Naive thymus-derived CD4-positive, alpha-beta T cell (primary cell): ENCODE measurements at regions of chr7 and their contacts with region 1.

Region 1: DNA sequence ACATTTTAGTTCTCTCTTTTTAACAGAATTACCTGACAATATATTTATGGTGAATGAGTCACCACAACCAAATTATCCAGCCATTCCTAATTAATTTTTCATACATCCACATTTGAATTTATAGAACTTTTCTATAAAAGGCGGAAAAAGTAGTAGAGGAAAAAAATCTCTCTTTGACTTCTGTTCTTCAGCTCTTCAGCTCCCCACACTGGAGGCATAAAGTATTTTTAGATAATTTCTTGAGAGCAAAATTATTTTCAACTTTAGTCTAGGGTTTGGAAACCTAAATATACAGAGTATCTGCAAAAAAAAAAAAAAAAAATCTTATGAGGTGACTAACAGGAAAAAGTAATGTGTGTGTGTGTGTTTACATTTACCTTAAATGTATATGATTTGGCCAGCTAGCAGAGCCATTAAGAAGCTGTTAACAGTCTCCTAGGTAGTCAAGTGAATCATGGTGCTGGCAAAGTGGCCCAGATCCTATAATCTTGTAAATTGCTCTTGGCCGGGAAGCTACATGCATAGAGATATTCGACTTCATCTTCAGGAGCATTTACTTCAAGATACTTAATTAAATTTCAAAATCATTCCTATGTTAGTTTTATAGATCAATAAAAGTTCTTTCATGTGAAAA is 383.1 kb upstream of the STEAP1 start:
- DNase-seq: no peak
- ATAC-seq: no peak
- H3K4me3 ChIP-seq: no peak overlapping the region
- H3K4me3 Mint-ChIP-seq: no peak overlapping the region
- H3K27ac ChIP-seq: no peak overlapping the region
- H3K27ac Mint-ChIP-seq: no peak overlapping the region
- H3K4me1 ChIP-seq: no peaks in the 10 kb centered on the region
- H3K4me1 Mint-ChIP-seq: no peaks in the 10 kb centered on the region
- H3K27me3 ChIP-seq: no peaks in the 10 kb centered on the region
- H3K27me3 Mint-ChIP-seq: no peaks in the 10 kb centered on the region

Region 2: GRCh38 chr7:88789480-88790064 is 981.5 kb before region 1 on chr7:
- CTCF ChIA-PET with region 1: interaction called, 4 read pairs
- POLR2A ChIA-PET with region 1: no interaction called
- intact Hi-C with region 1: loop called in 1 of 2 experiments (anchors 1 kb)
- DNase-seq: peak in 6 of 9 donors; percentile 1 to 42 (median 33)
- ATAC-seq: no peak
- H3K4me3 ChIP-seq: no peak overlapping the region
- H3K4me3 Mint-ChIP-seq: no peak overlapping the region
- H3K27ac ChIP-seq: no peak overlapping the region
- H3K27ac Mint-ChIP-seq: no peak overlapping the region
- H3K4me1 ChIP-seq: no peaks in the 10 kb centered on the region
- H3K4me1 Mint-ChIP-seq: no peaks in the 10 kb centered on the region
- H3K27me3 ChIP-seq: no peaks in the 10 kb centered on the region
- H3K27me3 Mint-ChIP-seq: no peaks in the 10 kb centered on the region

Region 3: GRCh38 chr7:88967432-88967831 is 803.7 kb before region 1 on chr7:
- CTCF ChIA-PET with region 1: no interaction called
- POLR2A ChIA-PET with region 1: no interaction called
- intact Hi-C with region 1: loop called in 1 of 2 experiments (anchors 5 kb)
- DNase-seq: no peak
- ATAC-seq: no peak
- H3K4me3 ChIP-seq: no peak overlapping the region
- H3K4me3 Mint-ChIP-seq: no peak overlapping the region
- H3K27ac ChIP-seq: no peak overlapping the region
- H3K27ac Mint-ChIP-seq: no peak overlapping the region
- H3K4me1 ChIP-seq: no peaks in the 10 kb centered on the region
- H3K4me1 Mint-ChIP-seq: no peaks in the 10 kb centered on the region
- H3K27me3 ChIP-seq: no peaks in the 10 kb centered on the region
- H3K27me3 Mint-ChIP-seq: no peaks in the 10 kb centered on the region

Region 4: DNA sequence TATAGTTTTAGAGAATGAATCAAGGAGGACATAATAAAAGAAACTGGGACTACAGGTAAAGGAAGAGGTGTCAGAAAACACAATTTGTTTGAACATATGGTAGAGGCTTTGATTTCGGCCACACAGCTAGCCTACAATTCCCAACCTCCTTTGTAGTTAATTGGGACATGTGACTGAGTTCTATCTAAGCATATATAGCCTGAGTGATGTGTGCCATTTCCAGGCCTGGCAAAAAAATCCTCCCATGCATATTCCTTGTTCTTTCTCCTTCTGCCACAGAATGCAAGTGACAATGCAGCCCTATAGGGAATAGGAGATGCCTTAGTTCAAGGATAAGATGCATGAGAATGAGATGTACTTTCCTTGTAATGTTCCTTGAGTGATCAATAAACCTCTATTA is 207.5 kb before region 1 on chr7:
- CTCF ChIA-PET with region 1: no interaction called
- POLR2A ChIA-PET with region 1: no interaction called
- intact Hi-C with region 1: no loop called
- DNase-seq: no peak
- ATAC-seq: no peak
- H3K4me3 ChIP-seq: no peak overlapping the region
- H3K4me3 Mint-ChIP-seq: no peak overlapping the region
- H3K27ac ChIP-seq: no peak overlapping the region
- H3K27ac Mint-ChIP-seq: no peak overlapping the region
- H3K4me1 ChIP-seq: no peaks in the 10 kb centered on the region
- H3K4me1 Mint-ChIP-seq: peaks cover 0 to 7% (median 0%) of the 10 kb centered on the region in 7 donors
- H3K27me3 ChIP-seq: no peaks in the 10 kb centered on the region
- H3K27me3 Mint-ChIP-seq: no peaks in the 10 kb centered on the region